Naive thymus-derived CD4-positive, alpha-beta T cell (primary cell): ENCODE measurements at regions of chr10 and their contacts with region 1.

Region 1: DNA sequence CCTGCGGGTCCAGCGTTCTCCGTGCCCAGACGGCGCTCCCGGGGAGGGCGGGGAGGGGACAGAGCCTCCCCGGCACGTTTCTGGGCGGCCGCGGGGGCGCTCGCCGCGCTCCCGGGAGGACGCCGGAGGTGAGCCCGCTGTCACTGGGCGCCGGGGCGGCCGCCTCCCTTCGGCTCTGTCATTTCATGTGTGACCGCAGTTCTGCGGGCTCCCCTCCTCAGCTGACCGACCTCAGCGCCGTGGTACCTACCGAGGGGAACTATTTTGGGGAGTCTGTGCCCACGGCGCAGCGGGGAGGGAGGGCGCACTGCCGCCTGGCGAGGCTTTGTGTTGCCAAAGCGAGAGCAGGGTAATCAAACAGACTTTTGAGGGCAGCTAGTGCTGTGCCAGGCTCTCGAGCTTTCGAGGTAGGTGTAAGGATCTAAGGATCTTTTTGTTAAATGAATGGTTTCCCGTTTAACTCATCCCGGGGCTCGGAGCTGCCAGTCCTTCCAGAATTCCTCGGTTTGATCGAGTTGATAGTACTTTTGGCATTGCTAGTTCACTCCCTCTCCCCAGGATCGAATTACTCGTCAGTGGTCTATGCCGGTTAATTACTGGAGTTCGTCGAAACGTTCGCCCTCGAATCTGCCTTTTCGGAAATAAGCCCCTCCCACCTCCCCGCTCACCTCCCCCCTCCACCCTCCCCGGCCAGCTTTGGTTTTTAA is 1.9 kb downstream of the ARID5B start:
- DNase-seq: peak; percentile 56 to 78 (median 69)
- ATAC-seq: peak; percentile 58
- H3K4me3 ChIP-seq: peak overlapping the region; percentile 96
- H3K4me3 Mint-ChIP-seq: peak overlapping the region; percentile 81 to 100 (median 94)
- H3K27ac ChIP-seq: peak overlapping the region; percentile 92
- H3K27ac Mint-ChIP-seq: peak overlapping the region; percentile 93 to 100 (median 97)
- H3K4me1 ChIP-seq: peaks cover 18 to 25% of the 10 kb centered on the region in 2 donors
- H3K4me1 Mint-ChIP-seq: peaks cover 14 to 59% (median 49%) of the 10 kb centered on the region in 7 donors
- H3K27me3 ChIP-seq: no peaks in the 10 kb centered on the region
- H3K27me3 Mint-ChIP-seq: peaks cover 0 to 2% (median 0%) of the 10 kb centered on the region in 5 donors

Region 2: GRCh38 chr10:61643316-61643751 is 260.0 kb before region 1 on chr10:
- CTCF ChIA-PET with region 1: no interaction called
- POLR2A ChIA-PET with region 1: no interaction called
- intact Hi-C with region 1: no loop called
- DNase-seq: no peak
- ATAC-seq: no peak
- H3K4me3 ChIP-seq: no peak overlapping the region
- H3K4me3 Mint-ChIP-seq: no peak overlapping the region
- H3K27ac ChIP-seq: no peak overlapping the region
- H3K27ac Mint-ChIP-seq: no peak overlapping the region
- H3K4me1 ChIP-seq: no peaks in the 10 kb centered on the region
- H3K4me1 Mint-ChIP-seq: no peaks in the 10 kb centered on the region
- H3K27me3 ChIP-seq: no peaks in the 10 kb centered on the region
- H3K27me3 Mint-ChIP-seq: peaks cover 0 to 10% (median 4%) of the 10 kb centered on the region in 5 donors

Region 3: DNA sequence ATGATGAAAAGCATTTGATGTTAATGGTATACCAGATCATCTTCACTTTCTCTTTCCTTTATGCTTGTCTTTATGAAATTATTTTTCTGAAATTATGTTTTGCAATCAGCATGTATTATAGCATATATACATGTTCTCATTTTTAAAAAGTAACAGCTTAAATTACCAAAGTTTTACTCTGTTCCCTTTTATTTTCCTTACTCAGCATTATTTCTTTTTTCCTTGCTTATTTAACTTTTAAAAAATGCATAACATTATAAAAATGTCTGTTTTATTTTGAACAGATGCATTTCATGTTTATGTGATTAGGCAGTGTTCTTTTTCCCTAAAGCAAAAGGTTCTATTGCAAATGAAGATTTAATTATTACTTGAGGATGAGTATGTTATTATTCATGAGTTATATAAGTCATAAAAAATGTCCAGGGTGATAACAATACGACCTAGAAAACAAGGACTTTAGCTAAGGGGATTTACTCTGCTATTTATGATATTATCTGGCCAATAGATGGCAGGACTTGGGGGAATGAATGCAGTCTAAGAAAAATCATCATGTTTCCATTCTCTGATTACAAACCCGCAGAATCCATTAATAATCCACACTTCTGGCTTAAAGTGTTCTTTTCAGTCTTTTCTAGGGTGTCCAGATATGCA is 202.2 kb before region 1 on chr10:
- CTCF ChIA-PET with region 1: no interaction called
- POLR2A ChIA-PET with region 1: no interaction called
- intact Hi-C with region 1: no loop called
- DNase-seq: no peak
- ATAC-seq: no peak
- H3K4me3 ChIP-seq: no peak overlapping the region
- H3K4me3 Mint-ChIP-seq: no peak overlapping the region
- H3K27ac ChIP-seq: no peak overlapping the region
- H3K27ac Mint-ChIP-seq: no peak overlapping the region
- H3K4me1 ChIP-seq: no peaks in the 10 kb centered on the region
- H3K4me1 Mint-ChIP-seq: no peaks in the 10 kb centered on the region
- H3K27me3 ChIP-seq: no peaks in the 10 kb centered on the region
- H3K27me3 Mint-ChIP-seq: peaks cover 5 to 11% (median 6%) of the 10 kb centered on the region in 5 donors

Region 4: DNA sequence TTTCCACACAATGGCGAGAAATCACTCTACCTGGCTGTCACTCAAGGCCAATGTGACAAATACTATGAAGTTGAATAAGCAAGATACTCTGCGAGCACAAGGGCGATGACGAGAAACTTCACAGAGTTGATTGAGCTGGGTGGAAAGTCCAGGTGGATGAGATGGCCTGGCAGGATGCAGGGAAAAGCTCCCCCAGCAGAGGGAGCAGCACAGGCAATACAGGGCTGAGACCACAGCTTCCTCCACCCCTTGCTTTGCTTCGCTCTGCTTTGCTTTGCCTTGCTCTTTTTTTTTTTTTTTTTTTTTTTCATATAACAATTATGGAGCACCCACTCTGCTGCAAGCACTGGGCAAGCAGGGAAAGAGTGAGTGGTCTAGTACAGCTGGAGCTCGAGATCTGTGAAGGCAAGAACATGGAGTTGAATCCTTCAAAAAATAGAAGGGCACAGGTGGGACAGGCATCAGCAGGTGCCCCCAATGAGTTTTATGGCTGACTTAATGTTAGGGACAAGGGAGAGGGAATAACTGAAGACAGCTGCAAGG is 152.4 kb before region 1 on chr10:
- CTCF ChIA-PET with region 1: interaction called, 10 read pairs
- POLR2A ChIA-PET with region 1: no interaction called
- intact Hi-C with region 1: loop called (anchors 1 kb)
- DNase-seq: peak; percentile 37 to 67 (median 58)
- ATAC-seq: peak; percentile 94
- H3K4me3 ChIP-seq: no peak overlapping the region
- H3K4me3 Mint-ChIP-seq: peak overlapping the region in 6 of 10 donors; percentile 6 to 58 (median 36)
- H3K27ac ChIP-seq: no peak overlapping the region
- H3K27ac Mint-ChIP-seq: peak overlapping the region in 4 of 9 donors; percentile 10 to 88 (median 48)
- H3K4me1 ChIP-seq: peaks cover 12 to 15% of the 10 kb centered on the region in 2 donors
- H3K4me1 Mint-ChIP-seq: peaks cover 0 to 29% (median 26%) of the 10 kb centered on the region in 7 donors
- H3K27me3 ChIP-seq: no peaks in the 10 kb centered on the region
- H3K27me3 Mint-ChIP-seq: peaks cover 0 to 4% (median 0%) of the 10 kb centered on the region in 5 donors

Region 5: GRCh38 chr10:61943674-61944410 is 40.5 kb after region 1 on chr10:
- CTCF ChIA-PET with region 1: interaction called, 7 read pairs
- POLR2A ChIA-PET with region 1: interaction called, 7 read pairs
- intact Hi-C with region 1: loop called (anchors 1 kb)
- DNase-seq: peak in 7 of 9 donors; percentile 25 to 58 (median 36)
- ATAC-seq: peak; percentile 65
- H3K4me3 ChIP-seq: peak overlapping the region; percentile 15
- H3K4me3 Mint-ChIP-seq: peak overlapping the region; percentile 60 to 86 (median 69)
- H3K27ac ChIP-seq: peak overlapping the region; percentile 58
- H3K27ac Mint-ChIP-seq: peak overlapping the region; percentile 47 to 94 (median 88)
- H3K4me1 ChIP-seq: peaks cover 28 to 46% of the 10 kb centered on the region in 2 donors
- H3K4me1 Mint-ChIP-seq: peaks cover 29 to 55% (median 51%) of the 10 kb centered on the region in 7 donors
- H3K27me3 ChIP-seq: no peaks in the 10 kb centered on the region
- H3K27me3 Mint-ChIP-seq: no peaks in the 10 kb centered on the region

Region 6: GRCh38 chr10:62038609-62039190 is 135.3 kb after region 1 on chr10:
- CTCF ChIA-PET with region 1: interaction called, 66 read pairs
- POLR2A ChIA-PET with region 1: interaction called, 51 read pairs
- intact Hi-C with region 1: loop called (anchors 1 to 2 kb)
- DNase-seq: peak; percentile 40 to 84 (median 69)
- ATAC-seq: peak; percentile 87
- H3K4me3 ChIP-seq: peak overlapping the region; percentile 37
- H3K4me3 Mint-ChIP-seq: peak overlapping the region; percentile 64 to 87 (median 72)
- H3K27ac ChIP-seq: peak overlapping the region; percentile 60
- H3K27ac Mint-ChIP-seq: peak overlapping the region; percentile 20 to 94 (median 74)
- H3K4me1 ChIP-seq: peaks cover 16 to 56% of the 10 kb centered on the region in 2 donors
- H3K4me1 Mint-ChIP-seq: peaks cover 48 to 92% (median 86%) of the 10 kb centered on the region in 7 donors
- H3K27me3 ChIP-seq: no peaks in the 10 kb centered on the region
- H3K27me3 Mint-ChIP-seq: no peaks in the 10 kb centered on the region

Region 7: GRCh38 chr10:62183442-62183841 is 280.1 kb after region 1 on chr10:
- CTCF ChIA-PET with region 1: no interaction called
- POLR2A ChIA-PET with region 1: interaction called, 20 read pairs
- intact Hi-C with region 1: loop called (anchors 1 kb)
- DNase-seq: peak in 8 of 9 donors; percentile 45 to 95 (median 90)
- ATAC-seq: peak; percentile 96
- H3K4me3 ChIP-seq: no peak overlapping the region
- H3K4me3 Mint-ChIP-seq: peak overlapping the region; percentile 10 to 77 (median 62)
- H3K27ac ChIP-seq: peak overlapping the region; percentile 74
- H3K27ac Mint-ChIP-seq: peak overlapping the region; percentile 84 to 98 (median 93)
- H3K4me1 ChIP-seq: peaks cover 36 to 67% of the 10 kb centered on the region in 2 donors
- H3K4me1 Mint-ChIP-seq: peaks cover 28 to 99% (median 87%) of the 10 kb centered on the region in 7 donors
- H3K27me3 ChIP-seq: no peaks in the 10 kb centered on the region
- H3K27me3 Mint-ChIP-seq: no peaks in the 10 kb centered on the region

Region 8: DNA sequence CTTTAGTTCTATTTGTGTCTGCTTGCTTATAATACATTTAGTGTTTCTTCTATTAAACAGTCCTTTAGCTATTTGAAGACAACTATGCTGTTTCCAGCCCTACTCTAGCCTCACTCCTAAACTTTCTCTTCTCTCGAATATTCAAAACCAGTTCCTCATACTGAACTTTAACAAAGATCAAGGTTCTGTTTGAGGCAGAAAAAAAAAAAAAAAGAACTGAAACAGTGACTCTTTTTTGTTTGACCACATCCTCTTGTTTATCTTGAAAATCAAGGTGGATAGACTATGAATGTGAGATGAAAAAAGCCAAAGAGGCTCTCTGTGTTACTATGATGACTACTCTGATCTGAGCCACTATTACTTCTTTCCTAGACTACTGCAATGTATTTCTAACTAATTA is 625.1 kb after region 1 on chr10:
- CTCF ChIA-PET with region 1: interaction called, 3 read pairs
- POLR2A ChIA-PET with region 1: no interaction called
- intact Hi-C with region 1: loop called in 1 of 2 experiments (anchors 2 kb)
- DNase-seq: peak in 7 of 9 donors; percentile 42 to 83 (median 78)
- ATAC-seq: peak; percentile 95
- H3K4me3 ChIP-seq: no peak overlapping the region
- H3K4me3 Mint-ChIP-seq: peak overlapping the region; percentile 0 to 78 (median 70)
- H3K27ac ChIP-seq: peak overlapping the region; percentile 44
- H3K27ac Mint-ChIP-seq: peak overlapping the region; percentile 47 to 86 (median 75)
- H3K4me1 ChIP-seq: peaks cover 24 to 39% of the 10 kb centered on the region in 2 donors
- H3K4me1 Mint-ChIP-seq: peaks cover 32 to 49% (median 43%) of the 10 kb centered on the region in 7 donors
- H3K27me3 ChIP-seq: no peaks in the 10 kb centered on the region
- H3K27me3 Mint-ChIP-seq: peaks cover 0 to 15% (median 0%) of the 10 kb centered on the region in 5 donors

Region 9: DNA sequence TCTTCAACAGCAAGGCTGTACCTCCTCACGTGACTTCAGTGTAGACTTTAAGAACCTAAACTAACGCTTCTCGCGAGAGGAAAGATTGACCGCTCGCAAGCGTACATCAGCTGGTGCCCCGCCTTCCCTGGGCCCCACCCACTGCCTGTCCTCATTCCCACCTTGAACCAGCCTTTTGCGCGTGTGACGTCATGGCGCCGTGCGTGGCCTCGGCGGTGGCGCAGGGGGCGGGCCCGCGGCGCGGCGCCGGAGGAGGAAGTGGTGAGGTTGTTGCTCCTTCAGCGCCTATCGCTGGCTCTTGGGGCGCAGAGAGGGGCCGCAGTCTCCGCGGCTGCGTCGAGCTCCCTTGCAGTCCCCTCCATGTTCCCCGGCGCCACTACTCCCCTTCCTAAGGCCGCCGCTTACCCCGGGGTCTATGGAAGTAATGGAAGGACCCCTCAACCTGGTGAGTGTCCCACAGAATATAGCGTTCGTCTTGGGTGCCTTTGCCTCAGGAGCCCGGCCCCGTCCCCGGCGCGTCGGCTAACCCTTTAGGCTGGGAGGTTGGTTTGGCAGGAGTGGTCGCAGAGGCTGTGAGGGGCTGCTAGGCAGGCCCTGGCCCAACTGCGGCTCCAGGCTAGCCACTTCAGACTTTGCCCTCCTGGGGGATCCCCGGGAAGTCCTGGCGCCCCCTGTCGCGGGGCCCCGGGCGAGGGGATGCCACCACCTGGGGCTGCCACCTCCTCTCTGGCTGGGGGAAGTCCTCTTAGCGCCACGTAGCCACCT is 1229.9 kb after region 1 on chr10 and contains the start of gene NRBF2:
- CTCF ChIA-PET with region 1: no interaction called
- POLR2A ChIA-PET with region 1: no interaction called
- intact Hi-C with region 1: loop called in 1 of 2 experiments (anchors 1 kb)
- DNase-seq: peak; percentile 96 to 98 (median 98)
- ATAC-seq: peak; percentile 94
- H3K4me3 ChIP-seq: peak within 1 kb of the TSS; percentile 81
- H3K4me3 Mint-ChIP-seq: peak within 1 kb of the TSS; percentile 75 to 94 (median 92)
- H3K27ac ChIP-seq: peak within 1 kb of the TSS; percentile 98
- H3K27ac Mint-ChIP-seq: peak within 1 kb of the TSS; percentile 89 to 98 (median 96)
- H3K4me1 ChIP-seq: peaks cover 17 to 30% of the 10 kb centered on the region in 2 donors
- H3K4me1 Mint-ChIP-seq: peaks cover 10 to 49% (median 32%) of the 10 kb centered on the region in 7 donors
- H3K27me3 ChIP-seq: no peaks in the 10 kb centered on the region
- H3K27me3 Mint-ChIP-seq: no peaks in the 10 kb centered on the region
- total RNA-seq, gene NRBF2: 14.5 to 26.0 (median 19.2) TPM